ENCODE measurements at regions of chr9 and their contacts with region 1.

Region 1: GRCh38 chr9:73104921-73105320 is 46.7 kb upstream of the ANXA1 start:
- DNase-seq: no peak
- H3K4me3 ChIP-seq: no peak overlapping the region
- H3K27ac ChIP-seq: no peak overlapping the region
- H3K4me1 ChIP-seq: peaks cover 0 to 5% (median 0%) of the 10 kb centered on the region in 4 donors
- H3K27me3 ChIP-seq: no peaks in the 10 kb centered on the region
- CTCF ChIP-seq: no peak
- EP300 ChIP-seq: no peak
- POLR2A ChIP-seq: no peak

Region 2: DNA sequence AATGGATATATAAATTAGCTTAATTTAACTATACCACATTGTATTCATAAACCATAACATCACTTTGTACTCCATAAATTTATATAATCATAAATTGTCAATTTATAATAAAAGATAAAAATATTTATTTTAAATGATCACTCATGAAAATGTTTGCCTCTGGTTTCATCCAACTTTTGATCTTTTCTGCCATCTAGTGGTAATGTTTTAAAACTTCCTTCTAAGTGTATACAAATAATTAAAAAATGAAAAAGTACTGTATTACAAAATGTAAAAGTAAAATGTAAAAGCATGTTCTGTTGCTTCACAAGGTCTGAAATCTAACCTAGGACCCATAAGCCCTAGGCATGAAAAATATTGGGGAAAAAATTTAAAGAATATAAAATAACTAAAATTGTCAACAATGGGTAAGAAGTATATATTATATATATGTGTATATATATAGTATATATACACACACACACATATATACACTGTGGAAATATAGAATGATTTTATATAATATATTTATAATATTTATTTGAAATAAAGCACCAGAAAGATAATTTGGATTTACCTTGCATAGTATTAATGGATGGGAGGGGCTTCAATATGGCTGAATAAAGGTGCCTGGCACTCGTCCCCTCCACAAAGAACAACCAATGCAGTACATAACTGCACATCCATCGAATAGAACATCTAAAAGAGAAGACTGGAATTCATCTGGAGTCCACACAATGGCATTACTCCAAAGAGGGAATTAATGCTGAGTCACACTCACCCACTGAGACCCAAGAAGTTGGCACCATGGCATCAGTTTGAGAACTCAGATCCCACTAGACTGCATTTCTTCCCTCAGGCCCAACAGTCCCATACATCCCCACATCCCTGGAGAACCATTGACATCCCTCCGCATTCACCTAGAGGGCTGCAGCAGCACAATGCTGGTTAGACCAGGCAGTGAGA is 79.3 kb after region 1 on chr9:
- intact Hi-C with region 1: loop called (anchors 5 kb)
- DNase-seq: peak in 1 of 2 donors; percentile 75
- H3K4me3 ChIP-seq: no peak overlapping the region
- H3K27ac ChIP-seq: no peak overlapping the region
- H3K4me1 ChIP-seq: peaks cover 0 to 11% (median 5%) of the 10 kb centered on the region in 4 donors
- H3K27me3 ChIP-seq: no peaks in the 10 kb centered on the region
- CTCF ChIP-seq: peak in 3 of 7 experiments; percentile 37 to 58 (median 56)
- EP300 ChIP-seq: no peak
- POLR2A ChIP-seq: no peak

Measured in stomach (tissue), 19 donors.